Right cardiac atrium (tissue), 5 donors: ENCODE measurements at regions of chr9 and their contacts with region 1.

Region 1: GRCh38 chr9:123339666-123340510 is 16.1 kb upstream of the CRB2 start:
- DNase-seq: no peak
- ATAC-seq: peak; percentile 53 to 63
- H3K4me3 ChIP-seq: peak overlapping the region; percentile 4
- H3K27ac ChIP-seq: peak overlapping the region; percentile 87
- H3K4me1 ChIP-seq: peaks cover 9% of the 10 kb centered on the region
- H3K27me3 ChIP-seq: no peaks in the 10 kb centered on the region

Region 2: DNA sequence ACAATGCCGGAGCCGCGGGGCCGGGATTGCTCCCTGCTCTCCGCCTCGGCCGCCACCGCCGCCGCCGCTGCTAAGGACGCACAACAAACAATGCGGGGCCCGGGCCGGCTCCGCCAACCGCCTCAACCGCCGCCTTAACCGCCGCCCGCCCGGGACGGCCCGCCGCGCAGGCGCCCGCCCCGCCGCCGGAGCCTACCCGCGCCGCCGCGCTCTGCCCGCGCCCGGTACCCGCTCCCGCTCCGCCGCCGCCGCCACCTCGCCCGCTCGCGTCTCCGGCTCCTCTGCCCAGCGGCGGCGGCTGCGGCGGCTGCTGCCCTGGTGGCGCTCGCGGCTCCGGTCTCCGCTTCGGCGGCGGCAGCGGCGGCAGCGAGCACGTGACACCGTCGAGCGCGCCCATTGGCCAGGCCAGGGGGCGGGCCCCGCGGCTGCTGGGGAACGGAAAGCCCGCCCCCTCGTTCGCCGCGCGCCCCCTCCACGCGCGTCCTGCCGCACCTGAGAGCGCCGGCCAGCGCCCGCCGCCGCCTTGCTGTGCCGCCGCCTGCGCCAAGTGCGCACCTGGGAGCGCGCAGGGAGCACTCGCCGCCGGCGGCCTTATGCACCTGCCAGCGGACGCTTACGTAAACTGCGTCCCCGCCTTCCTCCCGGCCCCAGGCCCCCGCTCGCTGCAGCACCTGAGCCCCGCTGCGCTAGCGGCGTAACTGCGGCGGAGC is 71.5 kb before region 1 on chr9 and contains the start of gene STRBP:
- intact Hi-C with region 1: loop called in 1 of 4 experiments (anchors 5 kb)
- DNase-seq: peak; percentile 90 to 97 (median 97)
- ATAC-seq: peak; percentile 97
- H3K4me3 ChIP-seq: peak within 1 kb of the TSS; percentile 68
- H3K27ac ChIP-seq: peak within 1 kb of the TSS; percentile 49
- H3K4me1 ChIP-seq: peaks cover 4% of the 10 kb centered on the region
- H3K27me3 ChIP-seq: no peaks in the 10 kb centered on the region
- total RNA-seq, gene STRBP: 18.2 to 26.8 (median 22.8) TPM